ENCODE measurements at regions of chr10 and their contacts with region 1.

Region 1: DNA sequence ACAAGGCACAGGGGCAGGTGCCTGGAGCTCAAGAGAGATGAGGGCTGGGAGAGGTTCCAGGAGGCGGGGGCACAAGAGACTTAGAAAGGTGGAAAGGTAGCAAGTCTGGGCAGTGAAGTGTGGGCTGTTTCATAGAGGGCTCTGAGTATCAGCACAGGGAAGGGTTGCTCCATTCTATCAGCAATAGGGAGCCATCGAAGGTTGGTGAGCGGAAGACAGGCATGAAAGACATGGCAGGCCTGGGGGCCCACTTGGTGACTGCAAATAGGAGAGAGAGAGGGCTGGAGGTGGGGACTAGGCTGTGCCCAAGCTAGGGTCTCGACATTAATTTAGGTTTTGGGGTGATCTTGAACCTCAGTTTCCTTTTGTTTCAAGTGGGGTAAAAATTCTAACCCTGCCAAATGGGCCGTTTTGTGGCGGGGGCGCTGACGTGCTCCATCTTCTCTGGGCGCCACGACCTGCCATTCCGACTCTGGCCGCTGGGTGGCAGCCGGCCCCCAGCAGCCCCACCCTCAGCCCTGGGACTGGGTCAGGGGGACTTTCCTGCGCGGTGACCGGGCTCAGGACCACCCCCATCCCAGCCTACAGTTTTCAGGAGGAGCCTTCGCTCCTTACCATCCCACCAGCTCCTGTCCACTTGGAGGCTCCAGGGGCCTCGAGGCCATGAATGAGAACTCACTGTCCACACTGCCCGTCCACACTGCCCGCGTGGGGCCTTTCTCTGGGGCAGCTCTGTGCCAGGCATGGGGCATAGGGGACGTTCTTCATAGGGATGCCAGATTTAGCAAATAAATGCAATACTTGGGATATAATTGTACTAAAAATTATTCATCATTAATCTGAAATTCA is 37.2 kb upstream of the PCBD1 start:
- DNase-seq: peak; percentile 92
- H3K4me3 ChIP-seq: peak overlapping the region in 1 of 2 experiments; percentile 32; a peak in 1 of 4 replicates
- H3K27ac ChIP-seq: no peak overlapping the region
- H3K4me1 ChIP-seq: peaks cover 5 to 19% of the 10 kb centered on the region in 2 experiments; a peak in 2 of 4 replicates
- H3K27me3 ChIP-seq: peaks cover 13% of the 10 kb centered on the region; the same call in 1 of the 2 replicates
- CTCF ChIP-seq: peak; percentile 89
- EP300 ChIP-seq: no peak
- RAD21 ChIP-seq: peak; percentile 89

Region 2: GRCh38 chr10:70935631-70936030 is 10.0 kb after region 1 on chr10:
- CTCF ChIA-PET with region 1: interaction called, 29 read pairs
- POLR2A ChIA-PET with region 1: no interaction called
- DNase-seq: no peak
- H3K4me3 ChIP-seq: no peak overlapping the region
- H3K27ac ChIP-seq: no peak overlapping the region
- H3K4me1 ChIP-seq: peaks cover 0 to 13% of the 10 kb centered on the region in 2 experiments; a peak in 1 of 4 replicates
- H3K27me3 ChIP-seq: peaks cover 9% of the 10 kb centered on the region; the same call in 1 of the 2 replicates
- CTCF ChIP-seq: no peak
- EP300 ChIP-seq: no peak
- RAD21 ChIP-seq: no peak

Region 3: DNA sequence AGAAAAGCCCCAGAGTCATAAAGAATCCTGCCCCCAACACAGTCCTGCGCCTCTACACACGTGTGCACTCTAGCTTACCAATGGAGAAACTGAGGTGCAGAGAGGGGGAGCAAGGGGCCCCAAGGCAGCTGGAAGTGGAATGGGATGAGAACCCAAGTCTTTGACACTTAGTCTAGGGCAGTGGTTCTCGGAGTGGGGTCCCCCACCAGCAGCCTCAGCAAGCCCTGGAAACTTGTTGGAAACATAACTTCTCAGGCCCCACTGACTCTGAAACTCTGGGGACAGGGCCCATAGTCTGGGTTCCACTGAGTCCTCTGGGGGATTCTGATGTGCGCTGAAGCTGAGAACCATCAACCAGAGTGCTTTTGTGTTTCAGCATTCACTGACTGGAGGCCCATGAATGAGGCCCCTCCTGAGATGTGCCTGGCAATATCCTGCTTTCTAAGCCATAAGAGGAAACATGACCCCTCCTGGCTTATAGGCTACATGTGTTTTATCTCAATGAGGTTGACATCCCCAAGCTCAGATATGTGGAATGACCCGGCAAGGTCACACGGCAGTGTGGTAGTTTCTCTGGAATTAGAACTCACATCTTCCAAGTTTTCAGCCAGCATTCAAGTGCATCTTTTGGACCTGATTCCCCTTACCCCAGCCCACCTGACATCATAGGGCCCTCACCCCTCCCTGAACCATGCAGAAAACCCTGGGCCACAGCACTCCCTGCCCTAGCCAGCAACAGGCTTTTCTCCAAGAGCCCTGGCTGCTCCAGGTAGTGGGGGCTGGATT is 110.1 kb after region 1 on chr10:
- CTCF ChIA-PET with region 1: interaction called, 15 read pairs
- POLR2A ChIA-PET with region 1: no interaction called
- DNase-seq: peak; percentile 73
- H3K4me3 ChIP-seq: no peak overlapping the region
- H3K27ac ChIP-seq: peak overlapping the region in 1 of 2 experiments; percentile 34; a peak in 1 of 4 replicates
- H3K4me1 ChIP-seq: peaks cover 0 to 39% of the 10 kb centered on the region in 2 experiments; a peak in 1 of 4 replicates
- H3K27me3 ChIP-seq: no peaks in the 10 kb centered on the region
- CTCF ChIP-seq: no peak
- EP300 ChIP-seq: no peak
- RAD21 ChIP-seq: no peak

Region 4: GRCh38 chr10:71064413-71065118 is 139.0 kb after region 1 on chr10:
- CTCF ChIA-PET with region 1: interaction called, 11 read pairs
- POLR2A ChIA-PET with region 1: no interaction called
- DNase-seq: no peak
- H3K4me3 ChIP-seq: no peak overlapping the region
- H3K27ac ChIP-seq: no peak overlapping the region
- H3K4me1 ChIP-seq: peaks cover 0 to 26% of the 10 kb centered on the region in 2 experiments; a peak in 1 of 4 replicates
- H3K27me3 ChIP-seq: no peaks in the 10 kb centered on the region
- CTCF ChIP-seq: peak; percentile 18; the same call in 1 of the 2 replicates
- EP300 ChIP-seq: no peak
- RAD21 ChIP-seq: peak; percentile 38

Region 5: GRCh38 chr10:71212318-71213126 is 286.9 kb after region 1 on chr10 and contains the start of gene UNC5B:
- CTCF ChIA-PET with region 1: interaction called, 62 read pairs
- POLR2A ChIA-PET with region 1: interaction called, 7 read pairs
- DNase-seq: peak; percentile 97
- H3K4me3 ChIP-seq: peak within 1 kb of the TSS; percentile 90 to 98
- H3K27ac ChIP-seq: peak within 1 kb of the TSS; percentile 90 to 91
- H3K4me1 ChIP-seq: peaks cover 17 to 57% of the 10 kb centered on the region in 2 experiments; a peak in 2 of 4 replicates
- H3K27me3 ChIP-seq: peaks cover 7% of the 10 kb centered on the region; the same call in 1 of the 2 replicates
- CTCF ChIP-seq: no peak; the same call in 1 of the 2 replicates
- EP300 ChIP-seq: 0 out of 4 replicates have a peak, but pooled peaks of 1 of the 2 experiments have one; percentile 23
- RAD21 ChIP-seq: peak; percentile 12
- polyA plus RNA-seq, gene UNC5B: 12.2 and 13.8 TPM in 2 replicates

Region 6: GRCh38 chr10:71278691-71279588 is 353.3 kb after region 1 on chr10:
- CTCF ChIA-PET with region 1: interaction called, 52 read pairs
- POLR2A ChIA-PET with region 1: interaction called, 3 read pairs
- DNase-seq: peak; percentile 90
- H3K4me3 ChIP-seq: no peak overlapping the region; a peak in 1 of 4 replicates
- H3K27ac ChIP-seq: peak overlapping the region in 1 of 2 experiments; percentile 99; a peak in 2 of 4 replicates
- H3K4me1 ChIP-seq: peaks cover 0 to 67% of the 10 kb centered on the region in 2 experiments; a peak in 3 of 4 replicates
- H3K27me3 ChIP-seq: no peaks in the 10 kb centered on the region
- CTCF ChIP-seq: no peak
- EP300 ChIP-seq: peak in 1 of 2 experiments; percentile 91; a peak in 2 of 4 replicates
- RAD21 ChIP-seq: peak; percentile 23; the same call in 1 of the 2 replicates

Measured in SK-N-SH (cell line).